A549 (cell line): ENCODE measurements at regions of chr16 and their contacts with region 1.

Region 1: DNA sequence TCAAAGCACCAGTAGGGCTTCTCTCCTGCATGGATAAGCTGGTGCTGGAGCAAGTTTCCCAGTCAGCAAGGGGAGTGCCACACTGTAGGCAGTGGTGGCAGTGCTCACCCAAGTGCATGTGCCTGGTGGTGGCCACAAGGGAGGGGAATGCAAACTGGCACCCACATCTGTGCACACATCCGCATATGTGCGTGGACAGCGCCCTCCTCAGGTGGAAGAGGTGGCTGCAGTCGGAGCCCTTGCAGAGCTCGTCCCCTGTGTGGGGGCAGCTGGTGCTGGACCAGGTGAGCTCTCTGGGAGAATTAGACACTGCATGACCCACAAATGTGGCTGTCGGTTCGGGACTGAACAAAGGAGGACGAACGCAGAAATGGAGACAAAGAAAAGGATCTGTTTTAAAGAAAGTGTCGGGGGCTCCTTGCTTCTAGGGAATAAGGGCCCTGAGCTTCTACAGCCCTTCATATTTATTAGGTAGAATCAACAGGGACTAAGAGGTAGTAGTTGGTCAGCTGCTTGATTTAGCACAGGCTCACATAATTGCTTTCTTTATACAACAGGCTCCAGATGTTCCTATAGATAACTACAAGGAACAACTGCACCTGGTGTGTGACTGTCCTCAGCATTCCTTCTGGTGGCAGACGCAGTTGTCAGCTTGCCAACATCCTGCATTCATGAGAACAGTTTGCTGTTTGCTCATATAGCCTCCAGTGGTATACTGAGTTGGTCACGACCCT is 5.3 kb upstream of the ZNF689 start:
- DNase-seq: peak; percentile 80 to 84
- ATAC-seq: peak; percentile 92 to 94
- H3K4me3 ChIP-seq: no peak overlapping the region
- H3K27ac ChIP-seq: no peak overlapping the region
- H3K4me1 ChIP-seq: peaks cover 16% of the 10 kb centered on the region; the same call in 2 of the 3 replicates
- CTCF ChIP-seq: peak; percentile 73
- EP300 ChIP-seq: no peak
- POLR2A ChIP-seq: no peak
- RAD21 ChIP-seq: peak; percentile 80 to 90

Region 2: GRCh38 chr16:30437486-30438046 is 178.0 kb before region 1 on chr16:
- CTCF ChIA-PET with region 1: interaction called, 16 read pairs
- POLR2A ChIA-PET with region 1: no interaction called
- DNase-seq: no peak
- ATAC-seq: peak in 1 of 2 experiments; percentile 43; a peak in 2 of 6 replicates
- H3K4me3 ChIP-seq: no peak overlapping the region
- H3K27ac ChIP-seq: no peak overlapping the region
- H3K4me1 ChIP-seq: peaks cover 9% of the 10 kb centered on the region; the same call in 2 of the 3 replicates
- CTCF ChIP-seq: no peak
- EP300 ChIP-seq: no peak
- POLR2A ChIP-seq: no peak
- RAD21 ChIP-seq: no peak

Region 3: DNA sequence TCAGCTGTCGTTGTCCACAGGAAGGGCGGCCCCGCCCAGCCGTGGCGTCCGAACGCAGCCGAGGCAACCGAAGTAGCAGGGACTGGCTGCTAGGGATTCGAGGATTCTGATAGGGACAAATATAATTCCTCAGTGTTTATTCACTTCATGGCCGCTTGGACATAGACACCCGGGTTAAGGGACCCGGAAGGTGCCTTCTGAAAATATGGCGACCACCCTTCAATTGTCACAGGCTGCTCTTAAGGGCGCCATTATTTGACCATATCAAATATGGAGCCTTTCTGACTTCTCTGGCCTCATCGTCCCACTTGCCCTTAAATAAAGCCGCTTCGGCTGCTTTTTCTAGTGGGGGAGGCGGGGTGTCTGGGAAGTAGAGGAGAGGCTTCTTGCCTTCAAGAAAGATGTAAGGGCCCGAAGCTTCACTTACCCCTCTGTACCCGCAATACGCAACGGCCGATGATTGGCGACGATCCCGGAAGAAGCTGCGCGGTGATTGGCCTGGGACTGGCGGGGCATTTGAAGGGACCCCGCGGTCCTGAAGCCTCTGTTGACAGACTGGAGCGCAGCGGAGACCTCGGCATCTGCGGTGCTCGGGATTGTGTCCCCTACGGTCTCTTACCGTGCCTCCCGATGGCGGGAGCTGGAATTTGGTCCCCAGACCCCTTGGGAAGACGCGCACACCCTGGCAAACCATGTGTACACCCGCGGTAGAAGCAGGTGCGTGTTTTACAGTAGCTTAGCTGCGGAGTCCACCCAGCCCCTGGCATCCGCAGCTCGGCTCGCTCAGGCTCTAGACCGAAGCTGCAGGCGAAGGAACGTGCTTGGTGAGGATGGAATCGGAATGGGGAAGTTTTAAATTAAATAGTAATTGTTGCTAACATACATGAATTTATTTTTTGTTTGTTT is 43.6 kb before region 1 on chr16 and contains the start of gene ZNF688:
- CTCF ChIA-PET with region 1: interaction called, 14 read pairs
- POLR2A ChIA-PET with region 1: interaction called, 9 read pairs
- DNase-seq: peak; percentile 95 to 97
- ATAC-seq: peak; percentile 89 to 92
- H3K4me3 ChIP-seq: peak within 1 kb of the TSS; percentile 53
- H3K27ac ChIP-seq: peak within 1 kb of the TSS; percentile 87 to 98
- H3K4me1 ChIP-seq: peaks cover 42% of the 10 kb centered on the region
- CTCF ChIP-seq: no peak
- EP300 ChIP-seq: no peak
- POLR2A ChIP-seq: no peak
- RAD21 ChIP-seq: no peak
- polyA plus RNA-seq, gene ZNF688: 4.8 and 6.7 TPM in 2 replicates

Region 4: DNA sequence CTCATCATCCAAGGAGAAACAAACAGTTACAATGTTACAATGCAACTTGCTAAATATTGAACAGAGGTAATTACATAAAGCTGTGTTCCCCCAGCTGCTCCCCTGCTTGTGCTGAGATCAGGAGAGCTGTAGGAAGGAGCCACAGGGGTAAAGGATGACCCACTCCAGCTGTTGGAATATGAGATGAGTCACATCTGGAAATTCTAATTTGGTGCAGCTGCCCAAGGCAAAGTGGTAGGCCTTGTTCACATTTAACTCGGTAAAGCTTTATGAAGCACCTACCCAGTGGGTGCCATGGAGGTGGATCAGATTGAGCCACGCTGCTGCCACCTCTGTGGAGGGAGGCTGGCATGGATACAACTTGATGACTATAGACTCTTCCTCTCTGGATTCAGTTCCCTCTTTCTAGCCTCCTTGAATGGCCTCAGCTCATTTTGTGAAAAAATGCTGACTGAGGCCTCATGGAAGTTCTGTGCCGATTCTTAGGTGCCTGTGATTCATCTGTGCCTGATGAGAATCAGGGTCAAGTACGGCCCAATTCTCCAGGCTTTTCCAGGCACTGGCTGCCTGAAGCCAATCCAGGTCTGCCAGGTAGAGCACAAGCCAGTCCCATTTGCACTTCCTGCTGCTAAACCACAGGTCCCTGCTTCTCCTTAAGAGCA is 12.8 kb before region 1 on chr16:
- CTCF ChIA-PET with region 1: interaction called, 25 read pairs
- POLR2A ChIA-PET with region 1: interaction called, 4 read pairs
- DNase-seq: no peak
- ATAC-seq: no peak; a peak in 1 of 6 replicates
- H3K4me3 ChIP-seq: no peak overlapping the region
- H3K27ac ChIP-seq: no peak overlapping the region
- H3K4me1 ChIP-seq: no peaks in the 10 kb centered on the region
- CTCF ChIP-seq: no peak
- EP300 ChIP-seq: no peak
- POLR2A ChIP-seq: no peak
- RAD21 ChIP-seq: no peak

Region 5: GRCh38 chr16:30637942-30638341 is 22.4 kb after region 1 on chr16:
- CTCF ChIA-PET with region 1: interaction called, 120 read pairs
- POLR2A ChIA-PET with region 1: no interaction called
- DNase-seq: peak; percentile 42 to 82
- ATAC-seq: peak; percentile 54 to 73
- H3K4me3 ChIP-seq: no peak overlapping the region
- H3K27ac ChIP-seq: no peak overlapping the region
- H3K4me1 ChIP-seq: peaks cover 6% of the 10 kb centered on the region; the same call in 1 of the 3 replicates
- CTCF ChIP-seq: peak; percentile 57
- EP300 ChIP-seq: no peak
- POLR2A ChIP-seq: no peak
- RAD21 ChIP-seq: peak; percentile 62 to 77